Ascending aorta (tissue), 2 donors: ENCODE measurements at regions of chr6 and their contacts with region 1.

Region 1: DNA sequence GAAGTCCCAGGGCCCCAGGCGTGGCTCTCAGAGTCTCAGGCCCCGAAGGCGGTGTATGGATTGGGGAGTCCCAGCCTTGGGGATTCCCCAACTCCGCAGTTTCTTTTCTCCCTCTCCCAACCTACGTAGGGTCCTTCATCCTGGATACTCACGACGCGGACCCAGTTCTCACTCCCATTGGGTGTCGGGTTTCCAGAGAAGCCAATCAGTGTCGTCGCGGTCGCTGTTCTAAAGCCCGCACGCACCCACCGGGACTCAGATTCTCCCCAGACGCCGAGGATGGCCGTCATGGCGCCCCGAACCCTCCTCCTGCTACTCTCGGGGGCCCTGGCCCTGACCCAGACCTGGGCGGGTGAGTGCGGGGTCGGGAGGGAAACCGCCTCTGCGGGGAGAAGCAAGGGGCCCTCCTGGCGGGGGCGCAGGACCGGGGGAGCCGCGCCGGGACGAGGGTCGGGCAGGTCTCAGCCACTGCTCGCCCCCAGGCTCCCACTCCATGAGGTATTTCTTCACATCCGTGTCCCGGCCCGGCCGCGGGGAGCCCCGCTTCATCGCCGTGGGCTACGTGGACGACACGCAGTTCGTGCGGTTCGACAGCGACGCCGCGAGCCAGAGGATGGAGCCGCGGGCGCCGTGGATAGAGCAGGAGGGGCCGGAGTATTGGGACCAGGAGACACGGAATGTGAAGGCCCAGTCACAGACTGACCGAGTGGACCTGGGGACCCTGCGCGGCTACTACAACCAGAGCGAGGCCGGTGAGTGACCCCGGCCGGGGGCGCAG is at the start of gene HLA-A:
- DNase-seq: peak; percentile 85 to 98
- H3K4me3 ChIP-seq: peak within 1 kb of the TSS; percentile 67 to 68
- H3K27ac ChIP-seq: peak within 1 kb of the TSS; percentile 85 to 94
- H3K4me1 ChIP-seq: peaks cover 0 to 4% of the 10 kb centered on the region in 2 donors
- H3K27me3 ChIP-seq: no peaks in the 10 kb centered on the region
- CTCF ChIP-seq: no peak
- total RNA-seq, gene HLA-A: 1,099 TPM

Region 2: GRCh38 chr6:29723262-29723665 is 219.2 kb before region 1 on chr6 and contains the start of gene HLA-F:
- intact Hi-C with region 1: loop called (anchors 5 kb)
- DNase-seq: peak; percentile 81 to 96
- H3K4me3 ChIP-seq: peak within 1 kb of the TSS; percentile 85 to 94
- H3K27ac ChIP-seq: peak within 1 kb of the TSS; percentile 87 to 93
- H3K4me1 ChIP-seq: peaks cover 12 to 13% of the 10 kb centered on the region in 2 donors
- H3K27me3 ChIP-seq: no peaks in the 10 kb centered on the region
- CTCF ChIP-seq: no peak
- total RNA-seq, gene HLA-F: 75.0 TPM

Region 3: GRCh38 chr6:29887819-29888776 is 54.4 kb before region 1 on chr6:
- intact Hi-C with region 1: loop called (anchors 1 kb)
- DNase-seq: peak in 1 of 2 donors; percentile 92
- H3K4me3 ChIP-seq: peak overlapping the region in 1 of 2 donors; percentile 82
- H3K27ac ChIP-seq: peak overlapping the region in 1 of 2 donors; percentile 97
- H3K4me1 ChIP-seq: peaks cover 0 to 5% of the 10 kb centered on the region in 2 donors
- H3K27me3 ChIP-seq: no peaks in the 10 kb centered on the region
- CTCF ChIP-seq: no peak

Region 4: GRCh38 chr6:29926413-29927274 is 15.8 kb before region 1 on chr6:
- intact Hi-C with region 1: loop called (anchors 2 kb)
- DNase-seq: peak in 1 of 2 donors; percentile 82
- H3K4me3 ChIP-seq: peak overlapping the region in 1 of 2 donors; percentile 66
- H3K27ac ChIP-seq: peak overlapping the region in 1 of 2 donors; percentile 79
- H3K4me1 ChIP-seq: no peaks in the 10 kb centered on the region
- H3K27me3 ChIP-seq: no peaks in the 10 kb centered on the region
- CTCF ChIP-seq: no peak

Region 5: DNA sequence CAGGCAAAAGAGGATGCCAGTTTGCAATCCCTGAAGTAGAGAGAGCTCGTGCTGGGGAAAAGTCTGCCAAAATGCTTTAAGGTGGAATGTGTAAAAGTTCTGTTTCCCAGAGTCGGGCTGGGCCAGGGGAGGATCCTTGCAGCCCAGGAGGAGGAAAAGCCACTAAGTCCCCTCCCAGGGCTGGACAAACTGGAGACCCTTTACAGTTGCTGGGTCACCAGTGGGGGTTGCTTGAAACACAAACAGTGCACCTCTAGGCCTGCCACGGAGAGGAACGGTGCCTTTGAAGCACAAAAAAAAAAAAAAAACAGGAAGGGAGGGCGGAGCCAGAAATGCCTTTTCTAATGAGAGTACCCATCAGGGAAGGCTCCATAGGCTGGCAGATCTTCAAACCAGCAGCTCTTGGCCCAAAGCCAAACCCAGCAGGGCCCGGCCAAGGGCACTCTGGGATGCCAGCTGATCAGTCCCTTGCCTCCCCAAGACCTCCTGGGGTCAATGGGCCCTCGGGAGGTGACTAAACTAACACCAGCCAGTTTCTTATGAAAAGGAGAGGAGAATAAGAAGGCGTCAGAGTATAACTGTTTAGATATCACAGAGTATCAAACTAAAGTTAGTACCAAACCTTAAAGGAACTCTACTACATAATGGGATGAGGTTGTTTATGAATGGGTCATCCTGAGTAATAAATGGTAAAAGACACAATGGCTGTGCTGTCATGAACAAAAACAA is 23.6 kb after region 1 on chr6:
- intact Hi-C with region 1: loop called (anchors 1 kb)
- DNase-seq: peak; percentile 55 to 93
- H3K4me3 ChIP-seq: peak overlapping the region; percentile 40 to 50
- H3K27ac ChIP-seq: peak overlapping the region; percentile 83 to 84
- H3K4me1 ChIP-seq: peaks cover 13 to 23% of the 10 kb centered on the region in 2 donors
- H3K27me3 ChIP-seq: no peaks in the 10 kb centered on the region
- CTCF ChIP-seq: no peak

Region 6: GRCh38 chr6:29989211-29989610 is 46.7 kb after region 1 on chr6:
- intact Hi-C with region 1: no loop called
- DNase-seq: no peak
- H3K4me3 ChIP-seq: no peak overlapping the region
- H3K27ac ChIP-seq: no peak overlapping the region
- H3K4me1 ChIP-seq: no peaks in the 10 kb centered on the region
- H3K27me3 ChIP-seq: no peaks in the 10 kb centered on the region
- CTCF ChIP-seq: no peak

Region 7: GRCh38 chr6:30061092-30061857 is 118.8 kb after region 1 on chr6 and contains the start of gene POLR1H:
- intact Hi-C with region 1: loop called (anchors 5 kb)
- DNase-seq: peak; percentile 70 to 95
- H3K4me3 ChIP-seq: peak within 1 kb of the TSS; percentile 77 to 81
- H3K27ac ChIP-seq: peak within 1 kb of the TSS; percentile 81 to 90
- H3K4me1 ChIP-seq: peaks cover 3 to 16% of the 10 kb centered on the region in 2 donors
- H3K27me3 ChIP-seq: no peaks in the 10 kb centered on the region
- CTCF ChIP-seq: peak in 1 of 3 experiments; percentile 7
- total RNA-seq, gene POLR1H: 36.9 TPM